ENCODE measurements at regions of chr6 and their contacts with region 1.

Region 1: GRCh38 chr6:139037490-139037889 is 8.9 kb downstream of the ABRACL start:
- DNase-seq: no peak
- ATAC-seq: no peak
- H3K4me3 ChIP-seq: no peak overlapping the region
- H3K4me3 Mint-ChIP-seq: no peak overlapping the region
- H3K27ac ChIP-seq: no peak overlapping the region
- H3K27ac Mint-ChIP-seq: peak overlapping the region in 1 of 2 donors; percentile 26
- H3K4me1 ChIP-seq: peaks cover 0 to 7% of the 10 kb centered on the region in 2 experiments
- H3K4me1 Mint-ChIP-seq: peaks cover 26 to 42% (median 28%) of the 10 kb centered on the region in 3 donors
- H3K27me3 ChIP-seq: no peaks in the 10 kb centered on the region
- H3K27me3 Mint-ChIP-seq: no peaks in the 10 kb centered on the region

Region 2: GRCh38 chr6:139010674-139011073 is 26.8 kb before region 1 on chr6:
- CTCF ChIA-PET with region 1: no interaction called
- POLR2A ChIA-PET with region 1: no interaction called
- DNase-seq: no peak
- ATAC-seq: no peak
- H3K4me3 ChIP-seq: no peak overlapping the region
- H3K4me3 Mint-ChIP-seq: no peak overlapping the region
- H3K27ac ChIP-seq: no peak overlapping the region
- H3K27ac Mint-ChIP-seq: no peak overlapping the region
- H3K4me1 ChIP-seq: no peaks in the 10 kb centered on the region
- H3K4me1 Mint-ChIP-seq: no peaks in the 10 kb centered on the region
- H3K27me3 ChIP-seq: no peaks in the 10 kb centered on the region
- H3K27me3 Mint-ChIP-seq: no peaks in the 10 kb centered on the region

Region 3: DNA sequence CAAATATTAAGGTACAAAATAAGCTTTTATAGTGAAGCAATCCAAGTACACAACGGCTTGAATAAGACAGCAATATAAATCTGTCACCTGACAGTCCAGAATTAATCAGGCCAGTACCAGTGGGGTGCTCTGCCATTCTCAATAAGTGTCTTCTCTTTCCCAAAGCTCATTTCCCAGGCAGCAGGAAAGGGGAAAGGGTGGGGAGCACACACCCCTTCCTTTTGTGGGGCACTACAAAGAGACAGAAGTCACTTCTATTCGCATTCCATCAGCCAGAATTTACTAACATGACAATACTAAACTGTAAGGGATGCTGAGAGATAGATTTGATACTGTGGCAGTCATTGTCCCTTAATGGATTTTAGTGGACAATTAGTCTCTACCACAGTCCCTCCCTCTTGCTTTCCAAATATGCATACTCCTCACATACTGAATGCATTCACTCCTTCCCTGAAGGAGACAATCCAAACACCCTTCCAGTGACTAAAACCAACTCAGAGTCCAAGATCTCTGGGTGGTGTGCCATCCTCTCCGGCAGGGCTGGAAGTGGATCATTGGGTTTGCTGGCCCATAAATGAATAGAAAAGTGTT is 41.5 kb after region 1 on chr6:
- CTCF ChIA-PET with region 1: interaction called in 1 of 2 experiments, 12 read pairs
- POLR2A ChIA-PET with region 1: no interaction called
- DNase-seq: no peak
- ATAC-seq: no peak
- H3K4me3 ChIP-seq: no peak overlapping the region
- H3K4me3 Mint-ChIP-seq: no peak overlapping the region
- H3K27ac ChIP-seq: no peak overlapping the region
- H3K27ac Mint-ChIP-seq: no peak overlapping the region
- H3K4me1 ChIP-seq: no peaks in the 10 kb centered on the region
- H3K4me1 Mint-ChIP-seq: peaks cover 4 to 6% (median 5%) of the 10 kb centered on the region in 3 donors
- H3K27me3 ChIP-seq: no peaks in the 10 kb centered on the region
- H3K27me3 Mint-ChIP-seq: no peaks in the 10 kb centered on the region